ENCODE measurements at regions of chr16 and their contacts with region 1.

Region 1: DNA sequence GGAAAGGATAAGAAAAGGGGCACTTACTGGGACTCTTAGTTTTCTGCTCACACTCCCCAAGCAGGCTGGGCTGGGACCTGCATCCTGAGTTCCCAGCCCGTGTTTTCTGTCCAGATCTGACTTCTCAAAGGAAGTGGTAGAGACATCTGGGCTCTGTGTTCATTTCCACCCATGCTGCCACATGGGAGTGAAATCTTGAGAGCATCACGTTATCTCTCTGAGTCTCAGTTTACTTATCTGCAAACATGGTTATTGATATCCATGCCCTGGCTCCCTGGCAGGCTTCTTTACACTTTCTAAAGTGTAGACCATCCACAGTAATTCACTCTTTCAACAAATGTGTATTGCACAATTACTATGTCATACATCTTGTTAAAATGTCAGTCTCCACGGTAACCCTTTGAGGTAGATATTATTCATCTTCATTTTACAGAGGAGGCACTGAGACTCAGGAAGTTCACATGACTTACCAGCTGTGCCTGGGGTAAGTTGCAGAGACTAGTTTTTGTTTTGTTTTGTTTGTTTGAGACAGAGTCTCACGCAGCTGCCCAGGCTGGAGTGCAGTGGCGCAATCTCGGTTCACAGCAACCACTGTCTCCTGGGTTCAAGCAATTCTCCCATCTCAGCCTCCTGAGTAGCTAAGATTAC is 3.4 kb downstream of the ZNF688 start:
- DNase-seq: peak in 1 of 2 donors; percentile 72
- H3K4me3 ChIP-seq: no peak overlapping the region
- H3K27ac ChIP-seq: peak overlapping the region in 3 of 5 donors; percentile 7 to 63 (median 37)
- H3K4me1 ChIP-seq: peaks cover 19 to 45% (median 25%) of the 10 kb centered on the region in 4 donors
- H3K27me3 ChIP-seq: no peaks in the 10 kb centered on the region
- CTCF ChIP-seq: no peak
- EP300 ChIP-seq: no peak
- POLR2A ChIP-seq: no peak

Region 2: DNA sequence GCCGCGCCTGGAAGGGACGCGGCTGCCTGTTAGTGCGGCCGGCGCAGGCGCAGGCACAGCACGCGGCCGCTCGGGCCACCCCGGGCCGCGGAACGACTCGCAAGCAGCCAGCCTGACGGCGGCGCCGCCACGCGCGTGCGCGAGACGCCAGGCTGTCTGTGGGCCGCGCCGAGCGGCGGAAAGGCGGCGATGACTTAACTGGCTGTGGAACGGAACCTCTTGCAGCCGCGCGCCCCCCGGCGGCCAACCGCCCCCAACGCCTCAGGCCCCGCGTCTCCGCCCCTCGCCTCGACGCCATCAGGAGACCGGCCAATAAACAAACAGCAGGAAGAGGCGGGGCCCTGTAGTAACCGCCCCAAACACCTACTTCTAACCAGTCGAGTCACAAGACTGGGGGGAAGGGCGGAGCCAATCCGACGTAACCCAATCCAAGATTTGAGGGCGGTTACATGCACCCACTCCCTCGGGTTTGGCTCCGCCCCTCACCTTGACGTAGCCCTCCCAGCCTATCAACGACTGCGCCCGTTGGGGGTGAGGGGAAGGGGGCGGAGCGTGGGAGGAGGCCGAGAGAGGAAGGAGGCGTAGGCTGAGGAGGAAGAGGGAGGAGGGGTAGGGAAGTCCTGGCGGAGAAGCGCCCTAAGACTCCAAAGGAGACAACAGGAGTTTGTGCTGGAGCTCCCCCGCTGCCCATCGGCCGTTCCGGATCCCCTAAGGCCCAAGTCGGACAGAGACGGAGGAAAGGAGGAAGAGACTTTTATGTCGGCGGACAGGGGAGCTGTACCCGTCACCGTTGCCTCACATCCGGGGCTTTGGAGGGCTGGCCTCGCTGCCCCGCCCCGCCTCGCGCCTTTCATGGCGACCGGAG is 90.0 kb after region 1 on chr16 and contains the start of gene FBRS:
- intact Hi-C with region 1: loop called (anchors 10 kb)
- DNase-seq: peak; percentile 100
- H3K4me3 ChIP-seq: peak within 1 kb of the TSS; percentile 94 to 98 (median 96)
- H3K27ac ChIP-seq: peak within 1 kb of the TSS; percentile 96 to 99 (median 99)
- H3K4me1 ChIP-seq: peaks cover 35 to 60% (median 51%) of the 10 kb centered on the region in 4 donors
- H3K27me3 ChIP-seq: no peaks in the 10 kb centered on the region
- CTCF ChIP-seq: peak in 5 of 7 experiments; percentile 68 to 90 (median 81)
- EP300 ChIP-seq: no peak
- POLR2A ChIP-seq: peak in 2 of 4 donors; percentile 53 to 81
- total RNA-seq, gene FBRS: 20.4 to 185 (median 28.6) TPM

Region 3: DNA sequence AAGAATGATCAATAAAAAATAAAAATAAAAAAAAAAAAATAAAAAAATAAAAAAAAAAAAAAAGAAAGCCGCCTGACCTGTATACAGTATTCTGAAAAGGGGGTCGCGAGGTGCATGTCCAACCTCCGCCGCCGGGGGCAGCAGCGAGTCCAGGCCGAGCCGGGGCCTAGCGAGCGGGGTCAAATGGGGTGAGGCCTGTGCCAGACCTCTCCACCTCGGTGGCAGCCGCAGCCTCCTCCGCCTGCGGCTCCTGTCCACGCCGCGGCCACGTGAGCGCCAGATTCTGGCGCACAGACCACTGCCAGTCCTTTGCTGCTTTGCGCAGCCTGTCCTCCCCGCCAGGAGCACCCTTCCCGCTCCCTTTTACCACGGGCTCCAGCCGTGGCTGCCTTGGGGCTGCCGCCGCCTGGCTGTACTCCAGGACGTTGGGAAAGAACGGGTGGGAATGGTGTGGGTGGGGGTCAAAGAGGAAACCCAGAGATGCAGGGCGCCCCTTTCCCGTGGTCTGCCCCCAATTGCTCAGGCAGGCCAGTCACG is 537.6 kb after region 1 on chr16:
- intact Hi-C with region 1: no loop called
- DNase-seq: peak; percentile 88 to 89
- H3K4me3 ChIP-seq: peak overlapping the region in 3 of 4 donors; percentile 21 to 27 (median 26)
- H3K27ac ChIP-seq: peak overlapping the region; percentile 44 to 83 (median 65)
- H3K4me1 ChIP-seq: peaks cover 17 to 35% (median 29%) of the 10 kb centered on the region in 4 donors
- H3K27me3 ChIP-seq: no peaks in the 10 kb centered on the region
- CTCF ChIP-seq: peak in 5 of 7 experiments; percentile 77 to 91 (median 83)
- EP300 ChIP-seq: no peak
- POLR2A ChIP-seq: no peak

Measured in stomach (tissue), 19 donors.